Activated CD4-positive, alpha-beta T cell treated with anti-CD3 and anti-CD28 coated beads for 36 hours (primary cell): ENCODE measurements at regions of chr17 and their contacts with region 1.

Region 1: GRCh38 chr17:28598799-28599310 is at the start of gene SPAG5:
- DNase-seq: peak; percentile 97
- ATAC-seq: peak; percentile 92
- H3K4me3 Mint-ChIP-seq: peak within 1 kb of the TSS; percentile 89
- H3K27ac Mint-ChIP-seq: peak within 1 kb of the TSS; percentile 98
- H3K4me1 Mint-ChIP-seq: peaks cover 21% of the 10 kb centered on the region
- H3K27me3 Mint-ChIP-seq: no peaks in the 10 kb centered on the region
- total RNA-seq, gene SPAG5: 142 to 165 TPM

Region 2: GRCh38 chr17:27721797-27722196 is 877.1 kb before region 1 on chr17:
- CTCF ChIA-PET with region 1: no interaction called
- POLR2A ChIA-PET with region 1: no interaction called
- intact Hi-C with region 1: no loop called
- DNase-seq: no peak
- ATAC-seq: no peak
- H3K4me3 Mint-ChIP-seq: no peak overlapping the region
- H3K27ac Mint-ChIP-seq: no peak overlapping the region
- H3K4me1 Mint-ChIP-seq: no peaks in the 10 kb centered on the region
- H3K27me3 Mint-ChIP-seq: peaks cover 12% of the 10 kb centered on the region

Region 3: DNA sequence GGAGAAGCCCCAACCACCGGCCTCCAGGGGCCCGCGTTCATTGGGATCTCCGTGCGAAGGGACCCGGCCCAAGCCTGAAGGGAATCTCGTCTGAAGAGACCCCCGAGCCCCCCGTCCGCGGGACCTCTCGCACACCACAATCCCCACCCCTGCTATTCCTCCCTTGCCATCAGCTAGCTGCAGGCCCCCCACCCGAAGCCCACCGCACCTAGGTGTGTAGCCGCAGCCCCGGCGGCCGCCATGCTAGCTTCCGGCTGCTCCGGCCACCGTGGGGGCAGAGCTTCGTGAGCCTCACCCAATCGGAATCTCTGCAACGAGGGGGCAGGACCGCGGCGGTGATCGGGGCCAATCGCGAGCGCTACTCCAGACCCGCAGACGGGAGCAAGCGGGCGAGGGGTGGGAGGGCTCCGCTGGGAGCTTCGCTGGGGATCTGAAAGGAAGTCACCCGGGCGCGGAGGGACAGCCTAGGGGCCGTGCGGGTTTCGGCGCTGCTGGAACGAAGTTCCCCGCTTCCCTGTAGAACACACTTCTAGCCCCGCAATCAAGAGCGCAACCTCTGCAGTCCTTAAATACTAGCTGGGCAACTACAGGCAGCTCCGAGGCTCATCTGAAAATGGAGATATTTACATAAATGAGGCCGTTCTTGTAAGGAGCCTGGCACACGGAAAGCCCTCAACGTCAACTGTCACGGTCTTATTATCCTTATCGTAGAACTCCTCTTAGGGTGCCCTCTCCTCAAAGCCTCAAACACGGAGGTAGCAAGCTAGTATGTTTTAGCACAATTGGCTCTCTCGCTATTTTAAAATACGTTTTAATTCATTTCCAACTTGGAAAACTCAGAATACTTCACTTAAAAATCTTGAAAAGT is 27.4 kb before region 1 on chr17 and contains the start of gene PIGS:
- CTCF ChIA-PET with region 1: interaction called, 7 read pairs
- POLR2A ChIA-PET with region 1: interaction called, 16 read pairs
- intact Hi-C with region 1: loop called (anchors 1 kb)
- DNase-seq: peak; percentile 96
- ATAC-seq: peak; percentile 99
- H3K4me3 Mint-ChIP-seq: peak within 1 kb of the TSS; percentile 95
- H3K27ac Mint-ChIP-seq: peak within 1 kb of the TSS; percentile 94
- H3K4me1 Mint-ChIP-seq: peaks cover 51% of the 10 kb centered on the region
- H3K27me3 Mint-ChIP-seq: no peaks in the 10 kb centered on the region
- total RNA-seq, gene PIGS: 38.7 to 41.4 TPM

Region 4: DNA sequence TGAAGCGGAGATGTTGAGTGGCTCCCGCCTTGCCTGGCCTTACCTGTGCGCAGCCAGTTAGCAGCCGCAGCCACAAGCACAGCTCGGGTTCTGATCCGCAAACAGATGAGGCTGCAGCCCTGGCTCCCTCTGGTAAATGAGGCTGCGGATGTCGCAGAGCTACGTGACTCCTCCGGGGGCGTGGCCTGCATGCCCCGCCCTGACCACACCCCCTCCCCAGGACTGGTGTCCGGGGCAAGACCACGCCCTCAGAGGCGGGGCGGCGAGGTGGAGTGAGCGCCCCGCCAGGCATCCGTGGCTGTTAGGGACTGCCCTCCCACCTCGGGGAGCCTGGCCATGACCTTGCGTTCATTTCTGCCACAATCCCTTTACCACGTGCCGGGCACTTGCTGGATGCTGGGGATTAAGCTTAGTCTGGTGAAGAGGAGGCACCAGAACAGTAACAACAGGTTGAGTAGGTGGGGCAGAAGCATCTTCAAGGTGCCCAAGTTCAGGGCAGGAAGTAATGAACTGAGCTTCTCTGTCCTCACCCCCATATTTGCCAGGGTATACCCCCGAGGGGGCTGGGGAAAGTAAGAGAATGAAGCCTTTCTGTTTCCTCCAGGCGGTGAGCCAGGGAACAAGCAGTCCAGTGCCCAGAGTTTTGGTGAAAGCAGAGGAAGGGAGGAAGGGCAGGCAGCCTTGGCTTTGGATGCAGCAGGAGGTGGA is 21.9 kb before region 1 on chr17 and contains the start of gene ALDOC:
- CTCF ChIA-PET with region 1: interaction called, 7 read pairs
- POLR2A ChIA-PET with region 1: interaction called, 16 read pairs
- intact Hi-C with region 1: loop called (anchors 1 kb)
- DNase-seq: peak; percentile 99
- ATAC-seq: peak; percentile 92
- H3K4me3 Mint-ChIP-seq: peak within 1 kb of the TSS; percentile 87
- H3K27ac Mint-ChIP-seq: peak within 1 kb of the TSS; percentile 82
- H3K4me1 Mint-ChIP-seq: peaks cover 43% of the 10 kb centered on the region
- H3K27me3 Mint-ChIP-seq: no peaks in the 10 kb centered on the region
- total RNA-seq, gene ALDOC: 131 to 133 TPM

Region 5: DNA sequence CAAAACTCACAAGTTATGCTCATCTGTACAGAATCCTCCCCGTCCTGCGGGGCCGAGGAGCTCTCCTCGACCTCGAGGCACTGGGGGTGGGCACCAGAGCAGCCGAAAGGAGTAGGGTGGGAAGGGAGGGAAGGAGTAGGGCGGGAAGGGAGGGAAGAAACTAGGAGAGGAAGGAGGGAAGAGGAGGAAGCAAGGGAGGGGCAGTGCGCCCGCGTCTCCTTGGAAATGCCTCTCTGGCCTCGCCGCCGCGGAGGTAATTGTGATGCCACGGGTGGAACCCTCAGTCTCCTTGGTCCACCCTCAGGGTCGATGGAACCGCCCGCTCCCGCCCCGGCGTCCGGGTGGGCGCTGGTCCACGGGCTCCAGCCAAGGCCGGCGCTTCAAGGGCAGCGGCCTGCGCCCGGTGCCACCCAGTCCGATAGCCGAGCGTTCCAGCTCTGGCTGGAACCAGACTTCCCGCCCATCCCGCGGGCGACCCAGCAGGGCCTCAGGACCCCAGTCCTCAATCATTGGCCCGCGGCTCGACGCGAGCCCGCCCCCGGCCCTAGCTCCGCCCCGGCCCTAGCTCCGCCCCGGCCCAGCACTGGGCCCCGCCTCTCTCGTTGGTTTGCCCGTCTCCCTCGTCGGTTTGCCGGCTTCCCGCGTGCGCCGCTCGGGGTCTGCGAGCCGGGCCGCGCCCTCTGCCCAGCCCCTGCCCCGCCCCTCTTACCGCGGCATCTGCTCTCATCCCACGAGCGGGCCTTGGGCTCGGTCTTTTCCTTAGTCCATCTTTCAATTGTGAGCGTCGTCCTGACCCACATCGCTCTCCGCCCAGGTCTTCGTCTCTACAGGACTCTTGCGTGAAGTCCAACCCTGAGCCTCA is 112.2 kb after region 1 on chr17:
- CTCF ChIA-PET with region 1: no interaction called
- POLR2A ChIA-PET with region 1: no interaction called
- intact Hi-C with region 1: loop called in 1 of 2 experiments (anchors 1 kb)
- DNase-seq: peak; percentile 94
- ATAC-seq: peak; percentile 90
- H3K4me3 Mint-ChIP-seq: peak overlapping the region; percentile 80
- H3K27ac Mint-ChIP-seq: peak overlapping the region; percentile 91
- H3K4me1 Mint-ChIP-seq: peaks cover 19% of the 10 kb centered on the region
- H3K27me3 Mint-ChIP-seq: peaks cover 17% of the 10 kb centered on the region

Region 6: DNA sequence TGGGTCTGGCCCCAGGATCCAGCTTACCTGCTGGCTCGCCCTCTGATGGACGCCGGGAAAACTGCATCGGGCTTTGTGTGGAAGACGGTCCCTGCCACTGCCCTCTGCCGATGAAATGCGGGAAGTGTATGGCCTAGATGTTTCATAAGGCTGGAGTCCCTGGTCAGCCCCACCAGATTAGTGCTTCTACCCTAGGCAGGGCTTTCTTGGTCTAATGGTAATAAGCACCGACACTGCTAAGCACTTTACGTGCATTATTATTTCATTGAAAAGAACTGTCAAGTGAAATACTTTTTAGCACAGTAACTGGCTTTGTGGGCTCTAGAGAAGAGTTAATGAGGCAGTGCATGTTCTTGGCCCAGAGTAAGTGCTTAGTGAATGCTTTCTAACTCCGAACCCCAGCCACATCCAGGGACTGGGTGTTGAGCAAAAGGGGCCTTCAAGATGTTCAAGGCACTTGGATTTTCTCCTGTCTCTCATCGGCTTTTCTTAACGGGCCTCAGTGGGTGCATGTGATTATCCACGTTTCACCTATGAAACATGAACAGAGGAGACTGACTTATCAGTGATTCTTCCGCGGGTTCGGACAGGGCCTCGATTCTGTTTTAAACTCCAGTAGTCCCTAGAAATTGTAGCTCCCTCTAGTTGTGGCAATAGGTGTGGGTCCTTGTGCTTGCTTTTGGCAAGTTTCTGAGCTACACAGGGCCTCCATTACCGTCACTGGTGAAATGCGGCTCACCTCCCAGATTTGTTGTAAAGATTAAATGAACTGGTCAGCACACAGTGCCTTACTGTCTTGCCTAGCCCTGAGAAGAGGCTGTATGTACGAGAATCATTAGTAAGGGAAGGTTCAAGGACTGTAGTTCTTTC is 151.6 kb after region 1 on chr17:
- CTCF ChIA-PET with region 1: no interaction called
- POLR2A ChIA-PET with region 1: no interaction called
- intact Hi-C with region 1: no loop called
- DNase-seq: peak; percentile 96
- ATAC-seq: peak; percentile 87
- H3K4me3 Mint-ChIP-seq: no peak overlapping the region
- H3K27ac Mint-ChIP-seq: peak overlapping the region; percentile 60
- H3K4me1 Mint-ChIP-seq: peaks cover 43% of the 10 kb centered on the region
- H3K27me3 Mint-ChIP-seq: no peaks in the 10 kb centered on the region